ENCODE measurements at regions of chr3 and their contacts with region 1.

Region 1: GRCh38 chr3:18127174-18127858 is 297.8 kb downstream of the SATB1 start:
- DNase-seq: peak; percentile 25
- ATAC-seq: peak; percentile 95
- H3K4me3 Mint-ChIP-seq: peak overlapping the region; percentile 51
- H3K27ac Mint-ChIP-seq: peak overlapping the region; percentile 67
- H3K4me1 Mint-ChIP-seq: peaks cover 30% of the 10 kb centered on the region
- H3K27me3 Mint-ChIP-seq: no peaks in the 10 kb centered on the region
- CTCF ChIP-seq: no peak

Region 2: GRCh38 chr3:17894434-17895060 is 232.8 kb before region 1 on chr3:
- CTCF ChIA-PET with region 1: no interaction called
- POLR2A ChIA-PET with region 1: no interaction called
- intact Hi-C with region 1: loop called (anchors 2 kb)
- DNase-seq: no peak
- ATAC-seq: no peak
- H3K4me3 Mint-ChIP-seq: no peak overlapping the region
- H3K27ac Mint-ChIP-seq: no peak overlapping the region
- H3K4me1 Mint-ChIP-seq: no peaks in the 10 kb centered on the region
- H3K27me3 Mint-ChIP-seq: no peaks in the 10 kb centered on the region
- CTCF ChIP-seq: no peak

Region 3: DNA sequence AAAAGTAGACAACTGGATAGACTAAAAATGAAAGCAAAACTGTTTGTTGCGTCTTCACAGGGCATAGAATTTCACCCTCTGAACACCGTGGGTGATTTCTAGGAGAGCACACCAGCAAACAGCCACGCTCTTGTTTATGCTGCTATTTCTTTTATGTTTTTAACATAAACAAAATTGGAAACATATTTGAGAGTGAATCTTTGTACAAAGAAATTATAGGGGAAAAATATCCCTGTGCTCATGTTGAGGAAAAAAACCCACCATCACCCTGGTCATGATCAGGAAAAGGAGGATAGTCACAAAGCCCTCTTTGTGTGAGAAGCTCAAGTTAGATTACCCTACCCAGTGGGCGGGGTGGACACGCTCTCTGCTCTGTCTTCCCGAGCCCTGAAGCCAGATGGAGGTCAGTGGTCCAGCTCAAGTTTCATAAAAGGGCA is 15.5 kb before region 1 on chr3:
- CTCF ChIA-PET with region 1: no interaction called
- POLR2A ChIA-PET with region 1: interaction called, 4 read pairs
- intact Hi-C with region 1: loop called (anchors 2 kb)
- DNase-seq: no peak
- ATAC-seq: peak; percentile 28
- H3K4me3 Mint-ChIP-seq: peak overlapping the region; percentile 66
- H3K27ac Mint-ChIP-seq: no peak overlapping the region
- H3K4me1 Mint-ChIP-seq: peaks cover 11% of the 10 kb centered on the region
- H3K27me3 Mint-ChIP-seq: no peaks in the 10 kb centered on the region
- CTCF ChIP-seq: no peak

Region 4: DNA sequence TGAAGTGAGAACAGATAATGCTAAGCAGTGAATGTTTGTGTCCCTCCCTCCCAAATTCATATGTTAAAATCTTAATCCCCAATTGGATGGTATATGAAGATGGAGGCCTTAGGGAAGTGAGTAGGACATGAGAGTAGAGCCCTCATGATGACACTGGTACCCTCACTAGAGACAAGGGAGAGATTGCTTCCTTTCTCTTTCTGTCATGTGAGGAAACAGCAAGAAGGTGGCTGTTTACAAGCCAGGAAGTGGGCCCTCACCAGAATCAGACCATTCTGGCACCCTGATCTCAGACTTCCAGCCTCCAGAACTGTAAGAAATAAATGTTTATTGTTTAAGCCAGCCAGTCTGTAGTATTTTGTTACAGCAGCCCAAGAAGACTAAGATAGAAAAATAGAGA is 88.3 kb after region 1 on chr3:
- CTCF ChIA-PET with region 1: no interaction called
- POLR2A ChIA-PET with region 1: interaction called, 4 read pairs
- intact Hi-C with region 1: loop called (anchors 2 kb)
- DNase-seq: no peak
- ATAC-seq: peak; percentile 34
- H3K4me3 Mint-ChIP-seq: no peak overlapping the region
- H3K27ac Mint-ChIP-seq: no peak overlapping the region
- H3K4me1 Mint-ChIP-seq: peaks cover 34% of the 10 kb centered on the region
- H3K27me3 Mint-ChIP-seq: no peaks in the 10 kb centered on the region
- CTCF ChIP-seq: no peak

Region 5: GRCh38 chr3:18411541-18411940 is 284.2 kb after region 1 on chr3:
- CTCF ChIA-PET with region 1: no interaction called
- POLR2A ChIA-PET with region 1: no interaction called
- intact Hi-C with region 1: no loop called
- DNase-seq: no peak
- ATAC-seq: no peak
- H3K4me3 Mint-ChIP-seq: no peak overlapping the region
- H3K27ac Mint-ChIP-seq: no peak overlapping the region
- H3K4me1 Mint-ChIP-seq: no peaks in the 10 kb centered on the region
- H3K27me3 Mint-ChIP-seq: no peaks in the 10 kb centered on the region
- CTCF ChIP-seq: no peak

Measured in activated B cell treated with CpG ODN at 0.5 μM for 24 hours (primary cell).